Breast epithelium (tissue), 4 donors: ENCODE measurements at regions of chr22 and their contacts with region 1.

Region 1: GRCh38 chr22:43257549-43257948 is 70.6 kb upstream of the TTLL12 start:
- DNase-seq: no peak
- H3K4me3 ChIP-seq: no peak overlapping the region
- H3K27ac ChIP-seq: no peak overlapping the region
- H3K4me1 ChIP-seq: no peaks in the 10 kb centered on the region
- H3K27me3 ChIP-seq: no peaks in the 10 kb centered on the region
- CTCF ChIP-seq: no peak
- POLR2A ChIP-seq: no peak

Region 2: GRCh38 chr22:43337385-43337784 is 79.8 kb after region 1 on chr22:
- intact Hi-C with region 1: loop called (anchors 10 kb)
- DNase-seq: no peak
- H3K4me3 ChIP-seq: no peak overlapping the region
- H3K27ac ChIP-seq: no peak overlapping the region
- H3K4me1 ChIP-seq: peaks cover 0 to under 1% of the 10 kb centered on the region in 2 donors
- H3K27me3 ChIP-seq: peaks cover 0 to 19% of the 10 kb centered on the region in 2 donors
- CTCF ChIP-seq: no peak
- POLR2A ChIP-seq: no peak